MCF 10A (cell line): ENCODE measurements at regions of chr11 and their contacts with region 1.

Region 1: DNA sequence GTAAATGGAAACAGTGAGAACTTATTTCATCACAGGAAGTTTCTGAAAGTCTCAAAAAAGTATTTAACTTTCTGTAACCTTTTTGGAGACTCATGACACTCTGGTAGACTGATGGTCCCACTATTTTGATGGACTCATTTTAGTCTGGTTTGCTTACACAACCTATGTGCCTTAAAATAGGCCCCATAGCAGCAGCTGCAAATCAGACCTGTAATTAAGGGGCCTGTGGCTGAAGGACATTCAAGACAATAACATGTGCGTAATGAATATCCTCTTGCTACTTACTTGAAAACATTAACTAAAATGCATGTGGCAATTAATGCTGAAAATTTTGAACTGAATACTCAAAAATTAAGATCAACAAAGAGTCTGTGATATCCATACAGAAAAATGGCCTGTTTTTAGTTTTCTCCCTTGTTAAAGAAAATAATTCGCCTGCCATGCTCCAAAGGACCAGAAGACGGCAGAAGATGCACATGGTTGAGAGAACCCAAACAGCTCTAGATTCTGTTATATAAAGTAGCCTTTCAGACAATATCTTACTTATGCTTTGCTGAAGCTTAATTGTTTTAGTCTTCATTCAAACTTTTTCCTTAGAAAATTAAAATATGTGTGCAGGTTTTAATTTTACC is 568.5 kb downstream of the KCNA4 start:
- DNase-seq: peak; percentile 30
- H3K4me3 Mint-ChIP-seq: no peak overlapping the region
- H3K27ac Mint-ChIP-seq: no peak overlapping the region
- H3K4me1 Mint-ChIP-seq: no peaks in the 10 kb centered on the region
- H3K27me3 Mint-ChIP-seq: no peaks in the 10 kb centered on the region
- CTCF ChIP-seq: peak; percentile 66

Region 2: DNA sequence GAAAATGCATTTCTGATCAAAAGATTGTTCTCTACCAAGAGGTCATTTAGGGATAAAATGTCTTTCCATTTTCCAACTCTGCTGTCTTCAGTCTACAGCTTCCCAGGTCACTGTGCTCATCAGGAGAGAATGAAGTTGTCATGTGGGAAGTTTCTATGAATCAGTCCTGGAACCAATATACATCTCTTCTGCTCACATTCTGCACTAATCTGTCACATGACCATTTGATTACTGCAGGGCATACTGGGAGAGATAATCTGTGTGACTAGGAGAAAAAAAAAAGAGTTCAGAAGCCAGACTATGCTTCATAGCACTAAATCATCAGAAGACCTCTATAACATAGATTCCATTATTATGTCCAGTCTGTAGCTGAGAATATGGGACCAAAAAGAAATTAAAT is 43.1 kb before region 1 on chr11:
- CTCF ChIA-PET with region 1: no interaction called
- POLR2A ChIA-PET with region 1: no interaction called
- intact Hi-C with region 1: no loop called
- DNase-seq: no peak
- H3K4me3 Mint-ChIP-seq: no peak overlapping the region
- H3K27ac Mint-ChIP-seq: no peak overlapping the region
- H3K4me1 Mint-ChIP-seq: no peaks in the 10 kb centered on the region
- H3K27me3 Mint-ChIP-seq: no peaks in the 10 kb centered on the region
- CTCF ChIP-seq: no peak

Region 3: DNA sequence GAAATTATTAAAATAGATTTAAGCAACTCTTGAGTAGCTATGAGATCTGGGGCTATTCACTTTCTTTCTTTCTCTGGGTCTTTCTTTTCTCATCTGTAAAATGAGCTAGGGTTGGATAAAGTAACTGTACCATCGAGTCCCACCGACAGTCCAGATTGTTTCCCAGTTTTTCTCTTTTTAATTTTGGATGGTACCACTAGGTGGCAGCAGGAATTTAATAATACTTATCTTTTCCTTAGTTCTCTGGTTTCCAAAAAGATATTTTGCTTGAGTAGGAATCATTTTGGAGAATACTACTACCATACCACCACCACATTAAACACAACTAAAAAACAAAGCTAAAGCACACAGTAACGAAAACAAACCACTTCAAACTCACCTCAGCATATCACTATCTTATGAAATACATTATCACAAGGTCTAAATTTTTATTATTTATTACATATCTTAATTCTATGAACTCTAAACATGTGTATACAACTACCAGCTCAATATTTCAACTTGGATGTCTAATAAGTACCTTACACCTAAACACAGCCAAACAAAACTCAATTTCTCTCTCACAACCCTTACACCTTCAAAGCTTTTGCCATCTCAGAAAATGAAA is 15.5 kb before region 1 on chr11:
- CTCF ChIA-PET with region 1: interaction called, 15 read pairs
- POLR2A ChIA-PET with region 1: no interaction called
- intact Hi-C with region 1: no loop called
- DNase-seq: peak; percentile 47
- H3K4me3 Mint-ChIP-seq: no peak overlapping the region
- H3K27ac Mint-ChIP-seq: no peak overlapping the region
- H3K4me1 Mint-ChIP-seq: peaks cover 8% of the 10 kb centered on the region
- H3K27me3 Mint-ChIP-seq: no peaks in the 10 kb centered on the region
- CTCF ChIP-seq: peak; percentile 69

Region 4: DNA sequence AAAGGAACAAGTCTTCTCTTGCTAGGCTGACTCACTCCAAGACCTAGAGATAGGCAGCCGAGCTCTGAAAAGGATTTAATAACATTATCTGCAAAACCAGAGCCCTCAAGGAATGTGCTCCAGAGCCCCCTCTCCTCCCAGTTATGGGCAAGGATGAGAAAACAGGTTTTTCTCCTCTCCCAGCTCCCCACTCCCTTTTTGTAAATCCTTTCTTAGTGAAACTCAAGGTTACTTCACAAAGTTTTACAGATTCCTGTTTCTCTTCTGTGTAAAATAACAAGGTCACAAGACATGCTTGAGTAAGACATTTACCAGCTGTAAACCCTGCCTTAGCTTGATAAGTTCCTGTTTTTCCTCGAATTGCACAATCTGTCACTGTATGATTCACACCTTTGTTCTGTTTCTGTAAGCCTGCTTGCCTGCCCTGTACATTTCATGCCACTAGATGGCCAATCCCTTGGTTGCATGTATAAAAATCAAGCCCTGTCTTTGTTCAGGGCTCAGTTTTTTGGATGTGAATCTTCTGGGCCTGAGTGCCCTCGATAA is 79.1 kb after region 1 on chr11:
- CTCF ChIA-PET with region 1: no interaction called
- POLR2A ChIA-PET with region 1: no interaction called
- intact Hi-C with region 1: no loop called
- DNase-seq: peak; percentile 93
- H3K4me3 Mint-ChIP-seq: peak overlapping the region; percentile 66
- H3K27ac Mint-ChIP-seq: peak overlapping the region; percentile 99
- H3K4me1 Mint-ChIP-seq: peaks cover 9% of the 10 kb centered on the region
- H3K27me3 Mint-ChIP-seq: no peaks in the 10 kb centered on the region
- CTCF ChIP-seq: peak; percentile 38

Region 5: GRCh38 chr11:29634248-29634647 is 185.9 kb after region 1 on chr11:
- CTCF ChIA-PET with region 1: no interaction called
- POLR2A ChIA-PET with region 1: no interaction called
- intact Hi-C with region 1: loop called (anchors 5 kb)
- DNase-seq: peak; percentile 30
- H3K4me3 Mint-ChIP-seq: no peak overlapping the region
- H3K27ac Mint-ChIP-seq: no peak overlapping the region
- H3K4me1 Mint-ChIP-seq: peaks cover 4% of the 10 kb centered on the region
- H3K27me3 Mint-ChIP-seq: no peaks in the 10 kb centered on the region
- CTCF ChIP-seq: peak; percentile 28

Region 6: DNA sequence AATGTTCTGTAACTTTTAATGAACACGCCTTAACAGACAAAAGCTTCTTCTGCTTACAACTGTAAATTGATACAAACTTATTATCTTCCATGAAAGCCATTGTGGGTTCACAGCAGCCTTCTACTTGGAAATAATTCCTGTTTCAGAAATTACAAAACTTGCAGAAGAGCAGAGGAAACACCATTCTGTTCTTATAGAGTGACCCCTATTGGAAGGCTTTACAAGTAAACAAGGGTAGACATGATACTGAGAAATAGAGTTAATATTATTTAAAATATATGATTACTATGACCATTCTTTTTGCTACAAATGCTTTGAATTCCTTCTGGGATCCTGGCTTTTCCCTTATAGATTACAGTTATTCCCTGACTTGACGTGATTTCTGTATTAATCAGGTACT is 600.9 kb after region 1 on chr11:
- CTCF ChIA-PET with region 1: no interaction called
- POLR2A ChIA-PET with region 1: no interaction called
- intact Hi-C with region 1: loop called (anchors 1 kb)
- DNase-seq: no peak
- H3K4me3 Mint-ChIP-seq: no peak overlapping the region
- H3K27ac Mint-ChIP-seq: no peak overlapping the region
- H3K4me1 Mint-ChIP-seq: no peaks in the 10 kb centered on the region
- H3K27me3 Mint-ChIP-seq: no peaks in the 10 kb centered on the region
- CTCF ChIP-seq: no peak

Region 7: GRCh38 chr11:30196400-30197206 is 748.2 kb after region 1 on chr11:
- CTCF ChIA-PET with region 1: interaction called, 10 read pairs
- POLR2A ChIA-PET with region 1: no interaction called
- intact Hi-C with region 1: loop called (anchors 1 kb)
- DNase-seq: peak; percentile 65
- H3K4me3 Mint-ChIP-seq: no peak overlapping the region
- H3K27ac Mint-ChIP-seq: peak overlapping the region; percentile 88
- H3K4me1 Mint-ChIP-seq: no peaks in the 10 kb centered on the region
- H3K27me3 Mint-ChIP-seq: no peaks in the 10 kb centered on the region
- CTCF ChIP-seq: peak; percentile 64

Region 8: GRCh38 chr11:30314625-30315024 is 866.3 kb after region 1 on chr11:
- CTCF ChIA-PET with region 1: interaction called, 18 read pairs
- POLR2A ChIA-PET with region 1: no interaction called
- intact Hi-C with region 1: loop called (anchors 1 kb)
- DNase-seq: no peak
- H3K4me3 Mint-ChIP-seq: no peak overlapping the region
- H3K27ac Mint-ChIP-seq: no peak overlapping the region
- H3K4me1 Mint-ChIP-seq: no peaks in the 10 kb centered on the region
- H3K27me3 Mint-ChIP-seq: peaks cover 12% of the 10 kb centered on the region
- CTCF ChIP-seq: peak; percentile 63